ENCODE measurements at regions of chr3 and their contacts with region 1.

Region 1: GRCh38 chr3:33096093-33096868 is 665 bp downstream of the GLB1 start:
- DNase-seq: peak; percentile 79 to 88
- ATAC-seq: peak; percentile 76
- H3K4me3 ChIP-seq: peak overlapping the region; percentile 94 to 97
- H3K27ac ChIP-seq: peak overlapping the region in 1 of 2 donors; percentile 73
- H3K4me1 ChIP-seq: no peaks in the 10 kb centered on the region
- H3K27me3 ChIP-seq: no peaks in the 10 kb centered on the region

Region 2: DNA sequence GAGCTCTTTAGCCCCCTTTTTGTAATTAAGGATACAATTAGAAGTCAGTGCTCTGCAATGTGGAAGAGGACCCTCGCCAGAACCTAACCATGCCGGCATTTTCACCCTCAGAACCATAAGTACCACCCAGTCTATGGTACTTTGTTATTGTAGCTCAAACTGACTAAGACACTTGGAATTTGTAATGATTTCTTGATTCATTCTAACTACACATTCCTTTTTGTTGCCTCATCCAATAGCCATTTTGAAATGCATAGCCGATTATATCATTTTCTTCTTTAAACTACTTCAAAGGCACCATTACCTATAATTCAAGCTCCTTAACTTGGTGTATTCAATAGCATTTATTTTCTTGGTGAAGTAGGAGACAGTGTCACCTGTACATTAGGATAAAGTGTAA is 60.7 kb before region 1 on chr3:
- intact Hi-C with region 1: no loop called
- DNase-seq: no peak
- ATAC-seq: no peak
- H3K4me3 ChIP-seq: no peak overlapping the region
- H3K27ac ChIP-seq: no peak overlapping the region
- H3K4me1 ChIP-seq: no peaks in the 10 kb centered on the region
- H3K27me3 ChIP-seq: no peaks in the 10 kb centered on the region

Region 3: DNA sequence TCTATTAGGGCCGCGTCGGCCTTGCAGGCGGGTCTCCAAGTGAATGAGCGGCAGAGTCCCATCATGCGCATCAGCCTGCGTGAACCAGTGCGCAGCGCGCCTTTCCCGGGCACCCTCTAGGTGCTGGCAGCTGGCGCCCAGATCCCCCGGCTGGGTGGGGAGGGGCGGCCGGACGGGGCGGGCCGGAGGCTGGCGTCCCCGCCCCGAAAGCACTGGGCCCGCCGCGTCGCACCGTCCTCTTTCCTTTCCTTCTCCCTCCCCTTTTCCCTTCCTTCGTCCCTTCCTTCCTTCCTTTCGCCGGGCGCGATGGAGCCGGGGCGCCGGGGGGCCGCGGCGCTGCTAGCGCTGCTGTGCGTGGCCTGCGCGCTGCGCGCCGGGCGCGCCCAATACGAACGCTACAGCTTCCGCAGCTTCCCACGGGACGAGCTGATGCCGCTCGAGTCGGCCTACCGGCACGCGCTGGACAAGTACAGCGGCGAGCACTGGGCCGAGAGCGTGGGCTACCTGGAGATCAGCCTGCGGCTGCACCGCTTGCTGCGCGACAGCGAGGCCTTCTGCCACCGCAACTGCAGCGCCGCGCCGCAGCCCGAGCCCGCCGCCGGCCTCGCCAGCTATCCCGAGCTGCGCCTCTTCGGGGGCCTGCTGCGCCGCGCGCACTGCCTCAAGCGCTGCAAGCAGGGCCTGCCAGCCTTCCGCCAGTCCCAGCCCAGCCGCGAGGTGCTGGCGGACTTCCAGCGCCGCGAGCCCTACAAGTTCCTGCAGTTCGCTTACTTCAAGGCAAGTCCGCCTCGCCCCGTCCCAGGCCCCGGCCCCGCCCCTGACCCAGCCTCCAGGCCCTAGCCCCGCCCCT is 17.7 kb after region 1 on chr3 and contains the start of gene CRTAP:
- intact Hi-C with region 1: loop called in 1 of 2 experiments (anchors 1 kb)
- DNase-seq: peak; percentile 98 to 99
- ATAC-seq: peak; percentile 98
- H3K4me3 ChIP-seq: peak within 1 kb of the TSS; percentile 29 to 60
- H3K27ac ChIP-seq: peak within 1 kb of the TSS; percentile 83 to 90
- H3K4me1 ChIP-seq: no peaks in the 10 kb centered on the region
- H3K27me3 ChIP-seq: no peaks in the 10 kb centered on the region
- total RNA-seq, gene CRTAP: 297 to 370 TPM

Region 4: DNA sequence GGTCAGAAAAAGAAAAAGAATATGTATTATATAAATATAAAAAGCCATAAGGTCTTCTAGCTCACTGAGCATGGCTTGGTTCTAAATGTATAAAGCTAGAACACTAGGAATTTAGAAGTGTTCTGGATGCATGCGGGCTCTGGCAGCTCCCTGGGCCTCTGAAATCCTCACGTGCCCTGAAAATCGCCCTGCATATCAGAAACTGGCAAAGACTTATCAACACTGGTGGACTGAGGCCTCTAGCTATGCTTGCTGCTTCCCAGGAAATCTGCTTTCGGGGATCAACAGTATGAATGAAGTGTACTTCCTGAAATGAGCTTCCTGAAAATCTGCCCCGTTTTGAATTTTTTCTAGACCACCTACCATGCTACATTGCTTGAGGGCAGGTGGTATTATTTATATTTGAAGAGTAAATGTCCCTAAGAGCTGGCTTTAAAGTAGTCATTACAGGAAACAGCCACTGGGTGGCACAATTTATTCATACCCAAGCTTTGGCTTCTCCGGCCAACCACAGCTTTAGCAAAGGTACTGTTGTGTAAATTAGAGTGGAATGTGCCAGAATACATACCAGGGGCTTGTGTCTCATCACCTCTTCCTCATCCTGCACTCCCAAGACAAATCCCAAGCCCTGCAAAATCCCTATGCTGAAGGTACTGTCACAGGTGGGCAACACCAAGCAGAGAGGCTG is 35.2 kb after region 1 on chr3:
- intact Hi-C with region 1: no loop called
- DNase-seq: no peak
- ATAC-seq: peak; percentile 84
- H3K4me3 ChIP-seq: no peak overlapping the region
- H3K27ac ChIP-seq: peak overlapping the region in 1 of 2 donors; percentile 77
- H3K4me1 ChIP-seq: peaks cover 0 to 2% of the 10 kb centered on the region in 2 donors
- H3K27me3 ChIP-seq: no peaks in the 10 kb centered on the region

Region 5: DNA sequence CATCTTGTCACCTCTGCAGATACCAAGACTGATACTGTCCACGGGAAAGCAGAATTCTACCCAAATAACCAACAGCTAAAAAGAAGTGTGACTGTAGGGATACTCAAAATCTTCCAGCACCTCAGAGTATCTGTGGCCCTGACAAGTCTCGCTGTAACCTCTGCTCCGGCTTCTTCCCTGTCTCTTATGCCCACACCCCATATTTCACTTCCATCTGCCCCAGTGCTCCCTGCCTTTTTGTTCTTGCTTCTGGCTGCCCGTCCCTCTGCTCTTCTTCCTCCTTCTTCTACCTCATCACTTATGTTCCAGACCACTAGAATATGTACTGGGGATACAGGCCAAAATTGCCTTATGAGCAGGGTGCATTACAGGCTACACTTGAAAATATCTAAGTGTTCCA is 63.0 kb after region 1 on chr3:
- intact Hi-C with region 1: no loop called
- DNase-seq: no peak
- ATAC-seq: no peak
- H3K4me3 ChIP-seq: no peak overlapping the region
- H3K27ac ChIP-seq: no peak overlapping the region
- H3K4me1 ChIP-seq: peaks cover 2 to 8% of the 10 kb centered on the region in 2 donors
- H3K27me3 ChIP-seq: no peaks in the 10 kb centered on the region

Region 6: DNA sequence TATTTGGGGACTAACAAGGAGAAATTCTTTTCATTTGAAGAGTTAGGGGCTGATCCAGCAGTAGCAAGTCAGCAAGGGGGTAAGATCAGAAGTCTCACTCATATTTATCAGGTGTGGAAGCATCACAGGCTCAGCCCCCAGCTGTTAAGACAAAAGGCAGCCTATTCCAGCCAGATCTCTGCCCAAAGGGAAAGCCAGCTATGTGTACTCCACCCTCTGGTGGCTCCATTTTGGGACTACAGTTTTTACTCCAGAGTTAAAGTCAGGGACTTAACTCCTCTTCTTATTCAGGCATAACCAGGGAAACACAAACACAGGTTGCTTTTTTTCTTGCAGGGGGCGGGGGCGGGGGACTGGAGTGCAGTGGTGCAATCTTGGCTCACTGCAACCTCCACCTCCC is 324.7 kb after region 1 on chr3:
- intact Hi-C with region 1: no loop called
- DNase-seq: no peak
- ATAC-seq: no peak
- H3K4me3 ChIP-seq: no peak overlapping the region
- H3K27ac ChIP-seq: no peak overlapping the region
- H3K4me1 ChIP-seq: no peaks in the 10 kb centered on the region
- H3K27me3 ChIP-seq: no peaks in the 10 kb centered on the region